Activated CD4-positive, alpha-beta T cell treated with anti-CD3 and anti-CD28 coated beads for 36 hours (primary cell): ENCODE measurements at regions of chr19 and their contacts with region 1.

Region 1: GRCh38 chr19:35959040-35959967 is 23.1 kb downstream of the LRFN3 start:
- DNase-seq: peak; percentile 87
- ATAC-seq: peak; percentile 89
- H3K4me3 Mint-ChIP-seq: peak overlapping the region; percentile 19
- H3K27ac Mint-ChIP-seq: no peak overlapping the region
- H3K4me1 Mint-ChIP-seq: peaks cover 33% of the 10 kb centered on the region
- H3K27me3 Mint-ChIP-seq: peaks cover 5% of the 10 kb centered on the region

Region 2: GRCh38 chr19:35318650-35319448 is 640.5 kb before region 1 on chr19:
- CTCF ChIA-PET with region 1: no interaction called
- POLR2A ChIA-PET with region 1: no interaction called
- intact Hi-C with region 1: no loop called
- DNase-seq: peak; percentile 40
- ATAC-seq: peak; percentile 66
- H3K4me3 Mint-ChIP-seq: no peak overlapping the region
- H3K27ac Mint-ChIP-seq: peak overlapping the region; percentile 27
- H3K4me1 Mint-ChIP-seq: peaks cover 7% of the 10 kb centered on the region
- H3K27me3 Mint-ChIP-seq: peaks cover 4% of the 10 kb centered on the region

Region 3: DNA sequence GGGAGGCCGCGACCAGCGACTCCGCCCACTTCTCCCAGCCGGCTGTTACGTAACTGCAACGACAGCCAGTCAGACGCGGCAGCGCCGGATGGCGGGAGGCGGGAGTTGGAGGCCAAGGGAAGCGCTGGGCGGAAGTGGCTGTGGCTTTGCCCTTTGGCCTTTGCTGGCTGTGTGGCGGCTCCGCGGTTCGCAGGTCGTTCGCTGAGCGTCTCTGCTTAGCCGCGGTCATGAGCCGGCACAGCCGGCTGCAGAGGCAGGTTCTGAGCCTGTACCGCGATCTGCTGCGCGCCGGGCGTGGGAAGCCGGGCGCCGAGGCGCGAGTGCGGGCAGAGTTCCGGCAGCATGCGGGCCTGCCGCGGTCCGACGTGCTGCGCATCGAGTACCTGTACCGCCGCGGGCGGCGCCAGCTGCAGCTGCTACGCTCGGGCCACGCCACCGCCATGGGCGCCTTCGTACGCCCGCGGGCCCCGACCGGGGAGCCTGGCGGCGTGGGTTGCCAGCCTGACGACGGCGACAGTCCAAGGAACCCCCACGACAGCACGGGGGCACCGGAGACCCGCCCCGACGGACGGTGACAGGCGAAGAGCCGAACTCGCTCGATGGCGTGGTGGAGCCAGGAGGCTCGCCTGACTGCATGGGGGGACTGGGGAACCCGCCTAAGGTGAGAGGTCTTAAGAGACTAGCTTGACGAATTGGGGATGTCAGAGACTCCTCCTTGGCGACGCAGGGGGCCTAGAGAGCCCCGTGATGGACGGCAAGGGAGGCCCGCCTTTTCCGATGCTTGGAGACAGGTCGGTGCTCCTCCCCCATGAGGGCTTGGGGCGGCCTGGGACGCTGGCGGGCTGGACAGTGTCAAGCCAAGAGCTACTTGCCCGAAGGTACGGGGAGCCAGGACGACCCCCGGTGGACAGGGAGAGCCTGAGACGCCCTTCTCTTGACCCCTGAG is 36.0 kb after region 1 on chr19 and contains the start of gene SDHAF1:
- CTCF ChIA-PET with region 1: interaction called, 4 read pairs
- POLR2A ChIA-PET with region 1: no interaction called
- intact Hi-C with region 1: loop called (anchors 2 to 5 kb)
- DNase-seq: peak; percentile 98
- ATAC-seq: peak; percentile 85
- H3K4me3 Mint-ChIP-seq: peak within 1 kb of the TSS; percentile 94
- H3K27ac Mint-ChIP-seq: peak within 1 kb of the TSS; percentile 96
- H3K4me1 Mint-ChIP-seq: peaks cover 34% of the 10 kb centered on the region
- H3K27me3 Mint-ChIP-seq: no peaks in the 10 kb centered on the region
- total RNA-seq, gene SDHAF1: 16.0 to 19.2 TPM